Panc1 (cell line): ENCODE measurements at regions of chr10 and their contacts with region 1.

Region 1: GRCh38 chr10:4267086-4267773 is 482.2 kb upstream of the KLF6 start:
- DNase-seq: no peak
- ATAC-seq: no peak
- H3K4me3 ChIP-seq: no peak overlapping the region
- H3K27ac ChIP-seq: peak overlapping the region; percentile 57
- H3K4me1 ChIP-seq: no peaks in the 10 kb centered on the region; the same call in none of the 2 replicates
- H3K27me3 ChIP-seq: no peaks in the 10 kb centered on the region
- CTCF ChIP-seq: peak; percentile 23; the same call in 1 of the 2 replicates

Region 2: DNA sequence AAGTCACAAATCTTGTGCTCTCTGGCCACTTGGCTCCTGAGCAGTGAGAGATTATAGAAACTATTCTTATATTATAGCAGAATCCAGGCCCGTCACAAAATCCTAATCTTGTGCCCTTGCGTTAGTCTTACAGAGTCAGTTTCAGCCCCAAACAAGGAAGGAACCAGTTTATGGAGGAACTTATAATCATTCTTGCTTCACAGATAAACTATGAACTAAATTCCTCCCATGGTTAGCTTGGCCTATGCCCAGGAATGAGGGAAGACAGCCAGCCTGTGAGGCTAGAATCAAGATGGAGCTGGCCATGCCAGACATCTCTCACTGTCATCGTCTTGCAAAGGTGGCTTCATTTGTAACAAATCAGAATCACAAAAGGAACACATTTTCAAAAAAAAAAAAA is 894.9 kb before region 1 on chr10:
- CTCF ChIA-PET with region 1: no interaction called
- POLR2A ChIA-PET with region 1: no interaction called
- in situ Hi-C with region 1: no loop called
- intact Hi-C with region 1: no loop called
- DNase-seq: no peak
- ATAC-seq: no peak
- H3K4me3 ChIP-seq: no peak overlapping the region
- H3K27ac ChIP-seq: no peak overlapping the region
- H3K4me1 ChIP-seq: no peaks in the 10 kb centered on the region
- H3K27me3 ChIP-seq: no peaks in the 10 kb centered on the region
- CTCF ChIP-seq: no peak

Region 3: GRCh38 chr10:3961082-3961481 is 306.1 kb before region 1 on chr10:
- CTCF ChIA-PET with region 1: interaction called, 14 read pairs
- POLR2A ChIA-PET with region 1: no interaction called
- in situ Hi-C with region 1: no loop called
- intact Hi-C with region 1: no loop called
- DNase-seq: no peak
- ATAC-seq: no peak
- H3K4me3 ChIP-seq: no peak overlapping the region
- H3K27ac ChIP-seq: peak overlapping the region; percentile 84
- H3K4me1 ChIP-seq: peaks cover 50% of the 10 kb centered on the region
- H3K27me3 ChIP-seq: no peaks in the 10 kb centered on the region
- CTCF ChIP-seq: no peak

Region 4: DNA sequence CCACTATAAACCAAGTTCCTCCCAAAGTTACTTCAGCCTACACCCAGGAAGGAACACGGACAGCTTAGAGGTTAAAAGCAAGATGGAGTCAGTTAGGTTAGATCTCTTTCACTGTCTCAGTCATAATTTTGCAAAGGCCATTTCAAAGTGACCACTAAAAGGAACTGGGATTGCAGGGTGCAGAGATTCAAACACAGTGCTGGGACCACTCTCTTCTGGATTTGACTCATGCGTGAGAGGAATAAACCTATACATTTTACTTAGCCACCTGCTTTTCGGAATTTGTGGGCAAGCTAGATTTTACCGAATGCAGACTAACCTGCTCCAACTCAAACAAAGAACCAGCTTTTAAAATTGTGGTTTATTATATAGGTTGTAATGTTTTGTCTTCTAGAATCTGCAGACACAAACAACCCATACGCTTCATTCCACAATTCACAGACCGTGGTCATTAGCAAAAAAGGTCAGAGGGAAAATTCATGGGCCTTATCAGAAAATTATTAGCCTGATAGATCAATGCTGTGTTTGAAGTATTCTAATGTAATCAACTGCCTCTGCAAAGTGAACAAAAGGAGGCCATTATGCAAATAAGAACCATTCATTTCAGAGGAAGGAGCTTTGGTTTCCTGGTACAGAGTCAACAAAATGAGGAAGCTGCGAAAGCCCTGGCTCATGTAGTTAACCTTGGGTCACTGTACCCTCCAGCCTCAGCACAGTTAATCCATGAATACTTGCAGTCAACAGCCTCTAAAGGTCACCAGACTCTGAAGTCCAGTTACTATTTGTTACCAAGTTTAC is 139.5 kb before region 1 on chr10:
- CTCF ChIA-PET with region 1: no interaction called
- POLR2A ChIA-PET with region 1: interaction called, 15 read pairs
- in situ Hi-C with region 1: no loop called
- intact Hi-C with region 1: no loop called
- DNase-seq: no peak
- ATAC-seq: no peak
- H3K4me3 ChIP-seq: no peak overlapping the region
- H3K27ac ChIP-seq: peak overlapping the region; percentile 75
- H3K4me1 ChIP-seq: peaks cover 12% of the 10 kb centered on the region
- H3K27me3 ChIP-seq: no peaks in the 10 kb centered on the region
- CTCF ChIP-seq: no peak